ENCODE measurements at regions of chr12 and their contacts with region 1.

Region 1: GRCh38 chr12:53065975-53066931 is 12.9 kb downstream of the SPRYD3 start:
- DNase-seq: peak; percentile 74 to 77
- H3K4me3 ChIP-seq: no peak overlapping the region
- H3K27ac ChIP-seq: peak overlapping the region; percentile 27 to 75 (median 71)
- H3K4me1 ChIP-seq: peaks cover 18 to 76% of the 10 kb centered on the region in 2 donors
- H3K27me3 ChIP-seq: no peaks in the 10 kb centered on the region
- CTCF ChIP-seq: peak; percentile 74 to 92 (median 86)
- POLR2A ChIP-seq: no peak

Region 2: DNA sequence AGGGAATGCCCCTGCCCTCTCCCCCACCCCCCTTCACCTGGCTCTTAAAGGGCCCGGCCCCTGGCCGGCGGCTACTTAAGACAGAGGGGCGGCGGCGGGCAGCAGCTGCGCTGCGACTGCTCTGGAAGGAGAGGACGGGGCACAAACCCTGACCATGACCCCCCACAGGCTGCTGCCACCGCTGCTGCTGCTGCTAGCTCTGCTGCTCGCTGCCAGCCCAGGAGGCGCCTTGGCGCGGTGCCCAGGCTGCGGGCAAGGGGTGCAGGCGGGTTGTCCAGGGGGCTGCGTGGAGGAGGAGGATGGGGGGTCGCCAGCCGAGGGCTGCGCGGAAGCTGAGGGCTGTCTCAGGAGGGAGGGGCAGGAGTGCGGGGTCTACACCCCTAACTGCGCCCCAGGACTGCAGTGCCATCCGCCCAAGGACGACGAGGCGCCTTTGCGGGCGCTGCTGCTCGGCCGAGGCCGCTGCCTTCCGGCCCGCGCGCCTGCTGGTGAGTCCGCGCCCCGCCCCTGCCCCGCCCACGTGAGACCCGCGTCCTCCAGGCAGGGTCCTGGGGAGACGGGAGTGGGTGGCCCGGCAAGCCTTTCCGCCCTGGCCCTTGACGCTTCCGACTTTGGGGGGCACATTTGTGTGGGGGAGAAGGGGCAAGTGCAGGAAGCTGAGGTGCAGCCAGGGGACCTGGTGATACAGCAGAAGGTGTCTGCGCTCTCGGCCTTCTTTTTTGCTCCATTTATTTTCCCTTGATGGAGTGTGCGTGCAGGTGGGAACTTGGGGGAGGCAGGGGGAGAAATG is 31.5 kb after region 1 on chr12 and contains the start of gene IGFBP6:
- intact Hi-C with region 1: loop called (anchors 2 kb)
- DNase-seq: peak; percentile 56 to 59
- H3K4me3 ChIP-seq: peak within 1 kb of the TSS in 2 of 3 donors; percentile 17 to 40
- H3K27ac ChIP-seq: peak within 1 kb of the TSS; percentile 59 to 76 (median 72)
- H3K4me1 ChIP-seq: peaks cover 13 to 34% of the 10 kb centered on the region in 2 donors
- H3K27me3 ChIP-seq: no peaks in the 10 kb centered on the region
- CTCF ChIP-seq: peak in 1 of 6 experiments; percentile 9
- POLR2A ChIP-seq: no peak
- total RNA-seq, gene IGFBP6: 76.6 to 363 (median 186) TPM

Region 3: GRCh38 chr12:53190108-53190729 is 124.0 kb after region 1 on chr12:
- intact Hi-C with region 1: loop called (anchors 10 kb)
- DNase-seq: peak; percentile 64 to 69
- H3K4me3 ChIP-seq: no peak overlapping the region
- H3K27ac ChIP-seq: no peak overlapping the region
- H3K4me1 ChIP-seq: no peaks in the 10 kb centered on the region
- H3K27me3 ChIP-seq: no peaks in the 10 kb centered on the region
- CTCF ChIP-seq: peak; percentile 7 to 71 (median 58)
- POLR2A ChIP-seq: no peak